Naive thymus-derived CD8-positive, alpha-beta T cell (primary cell): ENCODE measurements at regions of chr9 and their contacts with region 1.

Region 1: GRCh38 chr9:97890038-97890437 is 32.3 kb downstream of the TRMO start:
- DNase-seq: peak; percentile 17 to 78 (median 58)
- ATAC-seq: peak; percentile 60 to 74
- H3K4me3 Mint-ChIP-seq: no peak overlapping the region
- H3K27ac Mint-ChIP-seq: peak overlapping the region in 6 of 10 donors; percentile 30 to 68 (median 63)
- H3K4me1 Mint-ChIP-seq: peaks cover 3 to 14% (median 8%) of the 10 kb centered on the region in 4 donors
- H3K27me3 Mint-ChIP-seq: no peaks in the 10 kb centered on the region

Region 2: DNA sequence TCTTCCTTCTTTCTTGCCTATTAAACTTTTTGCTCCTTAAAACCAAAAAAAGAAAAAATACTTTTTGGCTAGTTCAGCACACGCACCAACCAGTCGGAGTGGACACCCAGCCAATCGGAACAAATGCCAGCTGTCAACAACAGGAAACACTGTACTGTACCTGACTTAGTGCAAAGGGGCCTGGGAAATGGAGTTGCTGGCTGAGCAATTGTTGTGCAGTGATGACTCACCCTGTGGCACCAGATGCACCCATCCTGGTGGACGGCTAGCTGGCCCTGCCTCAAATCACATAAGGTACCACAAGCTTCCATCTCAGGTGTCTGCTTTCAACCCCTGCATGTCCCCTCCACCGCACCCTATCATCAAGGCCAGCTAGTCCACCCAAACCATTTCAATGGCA is 16.2 kb before region 1 on chr9:
- POLR2A ChIA-PET with region 1: no interaction called
- DNase-seq: no peak
- ATAC-seq: no peak
- H3K4me3 Mint-ChIP-seq: no peak overlapping the region
- H3K27ac Mint-ChIP-seq: no peak overlapping the region
- H3K4me1 Mint-ChIP-seq: no peaks in the 10 kb centered on the region
- H3K27me3 Mint-ChIP-seq: peaks cover 4 to 17% (median 7%) of the 10 kb centered on the region in 5 donors

Region 3: DNA sequence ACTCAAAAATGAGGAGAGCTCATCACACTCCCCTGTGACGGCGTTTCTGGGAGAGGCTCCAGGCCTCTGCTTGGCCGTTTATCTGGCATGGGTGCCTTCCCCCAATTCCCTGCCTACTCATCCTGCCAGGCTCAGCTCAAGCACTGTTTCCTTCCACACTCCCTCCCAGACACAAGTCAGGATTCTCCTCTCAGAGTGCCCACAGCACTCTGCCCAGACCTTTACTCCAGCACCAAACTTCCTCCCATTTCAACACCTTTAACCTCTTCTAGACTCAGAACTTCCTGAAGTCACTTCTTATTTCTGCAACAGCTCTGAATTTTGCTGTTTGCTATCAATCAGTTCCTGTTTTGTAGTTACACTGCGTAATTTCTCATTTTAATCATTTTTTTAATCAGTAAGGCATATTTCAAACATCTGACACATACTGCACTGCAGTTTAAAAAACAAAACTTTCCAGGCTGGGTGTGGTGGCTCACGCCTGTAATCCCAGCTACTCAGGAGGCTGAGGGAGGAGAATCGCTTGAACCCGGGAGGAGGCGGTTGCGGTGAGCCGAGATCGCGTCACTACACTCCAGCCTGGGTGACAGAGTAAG is 16.3 kb after region 1 on chr9:
- POLR2A ChIA-PET with region 1: interaction called, 11 read pairs
- DNase-seq: peak in 6 of 10 donors; percentile 39 to 60 (median 49)
- ATAC-seq: peak; percentile 13 to 17
- H3K4me3 Mint-ChIP-seq: peak overlapping the region; percentile 71 to 98 (median 86)
- H3K27ac Mint-ChIP-seq: peak overlapping the region; percentile 89 to 99 (median 96)
- H3K4me1 Mint-ChIP-seq: peaks cover 45 to 92% (median 91%) of the 10 kb centered on the region in 4 donors
- H3K27me3 Mint-ChIP-seq: no peaks in the 10 kb centered on the region